ENCODE measurements at regions of chr6 and their contacts with region 1.

Region 1: DNA sequence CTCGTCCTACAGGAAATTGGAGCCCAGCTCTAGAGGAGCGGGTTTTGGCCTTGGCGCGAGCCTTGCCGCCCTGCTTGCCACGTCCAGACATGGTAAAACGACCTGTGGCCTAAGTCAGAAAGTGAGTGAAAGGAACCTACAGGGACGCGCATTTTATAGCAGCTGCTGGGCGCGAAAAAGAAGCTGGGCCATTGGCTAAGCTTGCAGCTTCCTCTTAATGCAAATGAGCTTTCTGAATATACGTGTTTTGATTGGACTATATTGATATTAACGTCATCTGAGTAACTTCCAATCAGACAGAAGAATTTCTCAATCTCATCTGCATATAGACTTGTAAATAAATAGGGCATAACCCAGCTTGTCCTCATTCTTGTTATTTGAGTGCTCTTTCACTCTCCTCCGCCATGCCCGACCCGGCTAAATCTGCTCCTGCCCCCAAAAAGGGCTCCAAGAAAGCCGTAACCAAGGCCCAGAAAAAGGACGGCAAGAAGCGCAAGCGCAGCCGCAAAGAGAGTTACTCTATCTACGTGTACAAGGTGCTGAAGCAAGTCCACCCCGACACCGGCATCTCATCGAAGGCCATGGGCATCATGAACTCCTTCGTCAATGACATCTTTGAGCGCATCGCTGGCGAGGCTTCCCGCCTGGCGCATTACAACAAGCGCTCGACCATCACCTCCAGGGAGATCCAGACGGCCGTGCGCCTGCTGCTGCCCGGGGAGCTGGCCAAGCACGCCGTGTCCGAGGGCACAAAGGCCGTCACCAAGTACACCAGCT is 18.9 kb downstream of the OR2B2 start:
- DNase-seq: peak; percentile 94
- H3K4me3 Mint-ChIP-seq: no peak overlapping the region
- H3K27ac Mint-ChIP-seq: no peak overlapping the region
- H3K4me1 Mint-ChIP-seq: peaks cover 39% of the 10 kb centered on the region
- H3K27me3 Mint-ChIP-seq: no peaks in the 10 kb centered on the region

Region 2: DNA sequence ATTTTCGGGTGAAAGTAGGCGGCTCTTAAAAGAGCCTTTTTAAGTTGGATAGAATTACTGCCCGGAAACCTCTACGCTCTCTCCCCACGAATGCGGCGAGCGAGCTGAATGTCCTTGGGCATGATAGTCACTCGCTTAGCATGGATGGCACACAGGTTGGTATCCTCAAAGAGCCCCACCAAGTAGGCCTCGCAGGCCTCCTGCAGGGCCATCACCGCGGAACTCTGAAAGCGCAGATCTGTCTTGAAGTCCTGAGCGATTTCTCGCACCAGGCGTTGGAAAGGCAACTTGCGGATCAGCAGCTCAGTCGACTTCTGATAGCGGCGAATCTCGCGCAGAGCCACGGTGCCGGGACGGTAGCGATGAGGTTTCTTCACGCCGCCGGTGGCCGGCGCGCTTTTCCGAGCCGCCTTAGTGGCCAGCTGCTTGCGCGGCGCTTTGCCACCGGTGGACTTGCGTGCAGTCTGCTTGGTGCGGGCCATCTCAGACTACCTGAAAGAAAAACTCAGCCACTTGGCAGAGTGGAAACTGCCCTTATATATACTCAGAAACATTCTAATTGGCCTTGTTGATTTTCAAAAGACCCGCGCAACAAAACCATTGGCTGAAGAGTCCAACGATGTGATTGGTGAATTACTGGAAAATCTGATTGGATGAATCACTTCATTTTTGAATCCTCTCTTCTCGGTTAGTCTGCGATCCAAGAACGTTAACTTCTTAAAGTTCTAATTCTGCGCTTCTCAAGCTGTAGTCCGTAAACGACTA is 1622.2 kb before region 1 on chr6:
- intact Hi-C with region 1: loop called (anchors 10 kb)
- DNase-seq: peak; percentile 79
- H3K4me3 Mint-ChIP-seq: no peak overlapping the region
- H3K27ac Mint-ChIP-seq: no peak overlapping the region
- H3K4me1 Mint-ChIP-seq: peaks cover 37% of the 10 kb centered on the region
- H3K27me3 Mint-ChIP-seq: no peaks in the 10 kb centered on the region

Region 3: GRCh38 chr6:27177485-27178406 is 715.5 kb before region 1 on chr6:
- intact Hi-C with region 1: loop called (anchors 5 kb)
- DNase-seq: peak; percentile 65
- H3K4me3 Mint-ChIP-seq: peak overlapping the region; percentile 90
- H3K27ac Mint-ChIP-seq: peak overlapping the region; percentile 87
- H3K4me1 Mint-ChIP-seq: peaks cover 11% of the 10 kb centered on the region
- H3K27me3 Mint-ChIP-seq: peaks cover 37% of the 10 kb centered on the region

Region 4: DNA sequence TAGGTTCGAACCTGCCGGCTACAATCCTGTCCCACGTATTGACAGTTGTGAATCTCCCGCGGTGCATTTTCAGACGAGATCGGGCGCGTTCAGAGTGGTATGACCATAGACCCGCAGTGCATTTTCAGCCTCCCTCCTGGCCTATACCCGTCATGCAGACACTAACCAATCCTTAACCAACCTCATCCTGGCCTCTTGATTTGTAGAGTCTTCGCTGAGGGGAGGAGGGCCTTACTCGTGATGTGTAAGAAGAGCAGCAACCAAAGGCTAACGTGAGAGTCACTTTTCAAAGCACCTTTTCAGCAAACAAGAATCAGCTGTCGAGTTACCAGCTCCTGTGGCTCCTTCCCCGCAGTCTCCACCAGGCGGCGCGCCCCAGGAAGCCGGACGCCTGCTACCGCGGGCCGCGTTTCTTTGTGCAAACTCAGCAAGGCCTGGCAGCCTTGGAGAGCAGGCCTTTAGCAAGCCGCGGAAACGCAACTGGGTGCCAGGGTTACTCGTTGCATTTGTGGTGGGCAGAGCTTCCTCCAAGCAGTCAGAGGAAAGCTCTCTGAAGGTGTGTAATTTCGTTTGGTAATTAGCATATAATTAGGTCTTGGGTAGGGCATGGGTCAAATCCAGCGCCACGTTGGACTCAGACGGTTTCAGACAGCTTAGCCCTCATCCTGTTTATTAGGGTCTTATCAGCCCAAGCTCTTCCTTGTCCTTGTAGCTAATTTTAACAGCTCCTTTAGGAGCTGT is 120.8 kb before region 1 on chr6:
- intact Hi-C with region 1: loop called (anchors 1 kb)
- DNase-seq: peak; percentile 82
- H3K4me3 Mint-ChIP-seq: no peak overlapping the region
- H3K27ac Mint-ChIP-seq: peak overlapping the region; percentile 43
- H3K4me1 Mint-ChIP-seq: peaks cover 12% of the 10 kb centered on the region
- H3K27me3 Mint-ChIP-seq: peaks cover 20% of the 10 kb centered on the region

Region 5: GRCh38 chr6:27871924-27872638 is 21.2 kb before region 1 on chr6:
- intact Hi-C with region 1: loop called (anchors 1 kb)
- DNase-seq: peak; percentile 85
- H3K4me3 Mint-ChIP-seq: peak overlapping the region; percentile 89
- H3K27ac Mint-ChIP-seq: peak overlapping the region; percentile 97
- H3K4me1 Mint-ChIP-seq: peaks cover 50% of the 10 kb centered on the region
- H3K27me3 Mint-ChIP-seq: no peaks in the 10 kb centered on the region

Region 6: GRCh38 chr6:27922949-27923348 is 29.7 kb after region 1 on chr6:
- intact Hi-C with region 1: no loop called
- DNase-seq: no peak
- H3K4me3 Mint-ChIP-seq: no peak overlapping the region
- H3K27ac Mint-ChIP-seq: no peak overlapping the region
- H3K4me1 Mint-ChIP-seq: no peaks in the 10 kb centered on the region
- H3K27me3 Mint-ChIP-seq: peaks cover 25% of the 10 kb centered on the region

Region 7: GRCh38 chr6:28969129-28969528 is 1075.9 kb after region 1 on chr6:
- intact Hi-C with region 1: no loop called
- DNase-seq: no peak
- H3K4me3 Mint-ChIP-seq: no peak overlapping the region
- H3K27ac Mint-ChIP-seq: no peak overlapping the region
- H3K4me1 Mint-ChIP-seq: no peaks in the 10 kb centered on the region
- H3K27me3 Mint-ChIP-seq: peaks cover 22% of the 10 kb centered on the region